ENCODE measurements at regions of chr10 and their contacts with region 1.

Region 1: GRCh38 chr10:6088721-6089390 is at the start of gene RBM17:
- DNase-seq: peak; percentile 98
- H3K4me3 Mint-ChIP-seq: peak within 1 kb of the TSS; percentile 90
- H3K27ac Mint-ChIP-seq: peak within 1 kb of the TSS; percentile 83
- H3K4me1 Mint-ChIP-seq: peaks cover 71% of the 10 kb centered on the region
- H3K27me3 Mint-ChIP-seq: no peaks in the 10 kb centered on the region
- total RNA-seq, gene RBM17: 151 to 155 TPM

Region 2: GRCh38 chr10:5889624-5890451 is 199.0 kb before region 1 on chr10 and contains the starts of genes ANKRD16 and FBH1:
- CTCF ChIA-PET with region 1: interaction called, 4 read pairs
- POLR2A ChIA-PET with region 1: no interaction called
- intact Hi-C with region 1: loop called (anchors 5 kb)
- DNase-seq: peak; percentile 98
- H3K4me3 Mint-ChIP-seq: peak within 1 kb of the TSS; percentile 93
- H3K27ac Mint-ChIP-seq: peak within 1 kb of the TSS; percentile 80
- H3K4me1 Mint-ChIP-seq: peaks cover 50% of the 10 kb centered on the region
- H3K27me3 Mint-ChIP-seq: no peaks in the 10 kb centered on the region
- total RNA-seq, gene ANKRD16: 5.9 to 6.4 TPM
- total RNA-seq, gene FBH1: 57.8 to 63.4 TPM

Region 3: GRCh38 chr10:5948999-5949759 is 139.7 kb before region 1 on chr10:
- CTCF ChIA-PET with region 1: no interaction called
- POLR2A ChIA-PET with region 1: no interaction called
- intact Hi-C with region 1: loop called (anchors 1 kb)
- DNase-seq: peak; percentile 68
- H3K4me3 Mint-ChIP-seq: no peak overlapping the region
- H3K27ac Mint-ChIP-seq: no peak overlapping the region
- H3K4me1 Mint-ChIP-seq: peaks cover 7% of the 10 kb centered on the region
- H3K27me3 Mint-ChIP-seq: no peaks in the 10 kb centered on the region

Region 4: GRCh38 chr10:6014241-6014761 is 74.6 kb before region 1 on chr10:
- CTCF ChIA-PET with region 1: interaction called, 6 read pairs
- POLR2A ChIA-PET with region 1: interaction called, 3 read pairs
- intact Hi-C with region 1: loop called (anchors 1 kb)
- DNase-seq: peak; percentile 67
- H3K4me3 Mint-ChIP-seq: no peak overlapping the region
- H3K27ac Mint-ChIP-seq: peak overlapping the region; percentile 90
- H3K4me1 Mint-ChIP-seq: peaks cover 69% of the 10 kb centered on the region
- H3K27me3 Mint-ChIP-seq: no peaks in the 10 kb centered on the region

Region 5: GRCh38 chr10:6027929-6028328 is 60.9 kb before region 1 on chr10:
- CTCF ChIA-PET with region 1: no interaction called
- POLR2A ChIA-PET with region 1: no interaction called
- intact Hi-C with region 1: no loop called
- DNase-seq: peak; percentile 25
- H3K4me3 Mint-ChIP-seq: no peak overlapping the region
- H3K27ac Mint-ChIP-seq: peak overlapping the region; percentile 44
- H3K4me1 Mint-ChIP-seq: peaks cover 43% of the 10 kb centered on the region
- H3K27me3 Mint-ChIP-seq: no peaks in the 10 kb centered on the region

Region 6: DNA sequence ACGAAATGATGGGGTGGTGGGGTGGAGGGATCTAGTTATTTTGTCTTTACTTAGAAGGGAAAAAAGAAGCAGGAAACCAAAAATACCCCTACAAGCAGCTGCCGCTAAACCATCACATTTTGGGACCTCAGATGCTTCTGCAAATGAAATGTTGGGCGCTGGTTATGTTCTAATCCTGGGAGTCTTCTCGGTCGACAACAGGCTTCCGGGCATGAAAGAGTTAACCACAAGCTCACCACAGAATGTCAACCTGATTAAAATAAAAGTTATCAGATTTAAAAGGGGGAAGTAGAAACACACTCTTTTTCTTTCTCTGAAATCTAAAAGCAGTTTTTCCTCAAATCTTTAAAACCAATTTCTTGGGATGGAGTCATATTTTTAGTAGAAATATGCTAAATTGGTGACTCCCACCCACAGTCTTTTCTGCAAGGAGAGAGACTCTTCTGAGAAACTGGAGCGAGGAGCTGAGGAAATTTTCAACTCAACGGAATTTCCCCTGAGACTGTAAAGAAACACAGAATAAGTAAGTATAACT is 43.5 kb before region 1 on chr10:
- CTCF ChIA-PET with region 1: interaction called, 167 read pairs
- POLR2A ChIA-PET with region 1: interaction called, 86 read pairs
- intact Hi-C with region 1: no loop called
- DNase-seq: peak; percentile 67
- H3K4me3 Mint-ChIP-seq: peak overlapping the region; percentile 67
- H3K27ac Mint-ChIP-seq: peak overlapping the region; percentile 94
- H3K4me1 Mint-ChIP-seq: peaks cover 93% of the 10 kb centered on the region
- H3K27me3 Mint-ChIP-seq: no peaks in the 10 kb centered on the region

Region 7: GRCh38 chr10:6062101-6062771 is 26.6 kb before region 1 on chr10 and contains the start of gene IL2RA:
- CTCF ChIA-PET with region 1: interaction called, 167 read pairs
- POLR2A ChIA-PET with region 1: interaction called, 157 read pairs
- intact Hi-C with region 1: no loop called
- DNase-seq: peak; percentile 86
- H3K4me3 Mint-ChIP-seq: peak within 1 kb of the TSS; percentile 99
- H3K27ac Mint-ChIP-seq: peak within 1 kb of the TSS; percentile 99
- H3K4me1 Mint-ChIP-seq: peaks cover 62% of the 10 kb centered on the region
- H3K27me3 Mint-ChIP-seq: peaks cover 2% of the 10 kb centered on the region
- total RNA-seq, gene IL2RA: 961 to 988 TPM

Region 8: GRCh38 chr10:6068422-6068821 is 20.4 kb before region 1 on chr10:
- CTCF ChIA-PET with region 1: interaction called, 112 read pairs
- POLR2A ChIA-PET with region 1: interaction called, 157 read pairs
- intact Hi-C with region 1: no loop called
- DNase-seq: peak; percentile 66
- H3K4me3 Mint-ChIP-seq: peak overlapping the region; percentile 71
- H3K27ac Mint-ChIP-seq: peak overlapping the region; percentile 96
- H3K4me1 Mint-ChIP-seq: peaks cover 92% of the 10 kb centered on the region
- H3K27me3 Mint-ChIP-seq: peaks cover 2% of the 10 kb centered on the region